MCF 10A (cell line): ENCODE measurements at regions of chr10 and their contacts with region 1.

Region 1: DNA sequence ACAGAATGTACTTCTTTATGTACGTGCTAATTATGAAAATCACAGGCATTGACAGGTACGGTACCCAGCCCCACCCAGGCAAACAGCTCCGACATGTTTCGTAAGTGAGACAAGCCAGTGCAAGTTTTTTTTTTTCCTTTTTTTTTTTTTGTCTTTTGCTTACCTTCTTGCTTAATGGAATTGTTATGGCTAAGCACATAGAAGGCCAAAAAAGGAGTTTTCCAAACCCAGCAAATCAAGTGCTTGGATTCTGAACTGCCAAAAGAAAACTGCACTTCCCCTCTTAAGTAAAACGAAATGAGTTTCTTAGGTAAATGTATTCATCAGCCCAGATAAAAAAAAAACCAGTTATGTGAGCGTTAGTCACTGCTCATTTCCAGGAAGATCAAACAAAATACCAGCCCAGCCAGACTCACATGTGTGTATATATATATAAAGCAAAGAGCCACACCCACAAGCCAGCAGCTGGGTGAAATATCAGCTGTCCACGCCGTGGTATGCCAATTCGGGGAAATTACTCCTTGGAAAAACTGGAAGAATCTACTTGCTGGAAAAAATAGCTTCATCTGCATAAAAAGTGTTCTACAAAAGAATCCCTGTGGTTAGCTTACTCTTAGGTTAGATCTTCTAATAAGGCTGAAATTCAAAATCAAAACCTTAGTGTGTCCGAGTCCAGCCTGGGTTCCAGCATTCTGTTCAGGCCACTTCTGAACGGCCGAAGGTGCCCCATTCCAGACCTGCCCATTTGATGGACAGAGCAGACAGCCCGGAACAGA is 8.0 kb downstream of the KLF6 start:
- DNase-seq: peak; percentile 92
- H3K4me3 Mint-ChIP-seq: peak overlapping the region; percentile 44
- H3K27ac Mint-ChIP-seq: peak overlapping the region; percentile 75
- H3K4me1 Mint-ChIP-seq: peaks cover 45% of the 10 kb centered on the region
- H3K27me3 Mint-ChIP-seq: no peaks in the 10 kb centered on the region
- CTCF ChIP-seq: no peak

Region 2: DNA sequence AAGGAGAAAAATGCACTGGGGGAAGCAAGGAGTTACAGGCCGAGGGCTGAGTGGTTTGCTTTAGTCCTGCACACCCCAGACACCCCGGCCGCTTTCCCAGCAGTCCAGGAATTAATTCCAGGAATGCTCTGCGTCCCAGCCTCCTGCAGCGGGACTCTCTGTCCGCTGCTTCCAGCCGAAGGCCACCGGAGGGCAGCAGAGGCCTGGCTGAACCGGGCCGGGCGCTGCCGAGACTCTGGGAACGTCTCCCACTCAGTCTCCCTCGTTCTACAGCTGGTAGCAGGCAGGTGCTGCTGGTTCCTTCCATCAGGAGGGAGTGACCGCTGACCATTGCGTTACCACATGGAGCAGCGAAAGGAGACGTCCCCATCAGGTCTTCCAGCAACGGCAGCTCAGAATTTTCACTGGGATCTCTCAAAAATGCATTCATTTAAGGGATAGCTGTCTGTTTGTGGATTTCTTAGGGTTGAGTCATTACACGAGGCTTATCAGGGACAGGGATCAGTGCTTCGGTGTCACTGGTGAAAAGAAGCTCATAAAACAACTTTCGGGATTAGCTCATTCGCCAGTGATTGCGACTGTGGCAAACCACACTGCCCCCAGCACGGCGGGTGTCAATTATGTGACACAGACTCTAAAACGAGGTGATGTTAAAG is 579.5 kb before region 1 on chr10:
- CTCF ChIA-PET with region 1: interaction called, 7 read pairs
- POLR2A ChIA-PET with region 1: interaction called, 4 read pairs
- intact Hi-C with region 1: loop called (anchors 1 kb)
- DNase-seq: peak; percentile 80
- H3K4me3 Mint-ChIP-seq: peak overlapping the region; percentile 69
- H3K27ac Mint-ChIP-seq: peak overlapping the region; percentile 61
- H3K4me1 Mint-ChIP-seq: peaks cover 16% of the 10 kb centered on the region
- H3K27me3 Mint-ChIP-seq: no peaks in the 10 kb centered on the region
- CTCF ChIP-seq: peak; percentile 79

Region 3: GRCh38 chr10:3472287-3473051 is 304.5 kb before region 1 on chr10:
- CTCF ChIA-PET with region 1: interaction called, 3 read pairs
- POLR2A ChIA-PET with region 1: interaction called, 94 read pairs
- intact Hi-C with region 1: loop called (anchors 1 kb)
- DNase-seq: peak; percentile 67
- H3K4me3 Mint-ChIP-seq: peak overlapping the region; percentile 13
- H3K27ac Mint-ChIP-seq: peak overlapping the region; percentile 74
- H3K4me1 Mint-ChIP-seq: peaks cover 44% of the 10 kb centered on the region
- H3K27me3 Mint-ChIP-seq: no peaks in the 10 kb centered on the region
- CTCF ChIP-seq: no peak

Region 4: GRCh38 chr10:3585385-3585784 is 191.6 kb before region 1 on chr10:
- CTCF ChIA-PET with region 1: no interaction called
- POLR2A ChIA-PET with region 1: no interaction called
- intact Hi-C with region 1: no loop called
- DNase-seq: no peak
- H3K4me3 Mint-ChIP-seq: no peak overlapping the region
- H3K27ac Mint-ChIP-seq: no peak overlapping the region
- H3K4me1 Mint-ChIP-seq: no peaks in the 10 kb centered on the region
- H3K27me3 Mint-ChIP-seq: no peaks in the 10 kb centered on the region
- CTCF ChIP-seq: no peak

Region 5: DNA sequence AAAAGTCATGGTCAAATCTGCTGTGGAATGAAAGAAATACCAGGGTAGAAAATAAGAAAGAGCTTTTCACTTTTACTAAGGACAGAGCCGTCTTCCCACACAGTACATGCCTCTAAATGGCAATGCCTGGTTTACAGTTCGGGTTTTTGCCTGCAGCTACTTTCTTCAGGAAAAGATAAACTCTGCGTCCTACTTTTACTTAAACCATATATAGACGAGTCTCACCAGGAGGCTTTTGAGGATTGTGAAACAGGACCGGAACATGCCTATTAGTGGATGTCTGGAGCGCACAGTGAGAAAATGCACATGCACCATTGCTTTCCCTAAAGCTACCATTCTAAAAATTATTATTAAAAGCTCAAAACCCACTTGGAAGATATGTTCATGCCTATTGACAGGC is 62.5 kb before region 1 on chr10:
- CTCF ChIA-PET with region 1: no interaction called
- POLR2A ChIA-PET with region 1: no interaction called
- intact Hi-C with region 1: no loop called
- DNase-seq: peak; percentile 61
- H3K4me3 Mint-ChIP-seq: no peak overlapping the region
- H3K27ac Mint-ChIP-seq: no peak overlapping the region
- H3K4me1 Mint-ChIP-seq: peaks cover 5% of the 10 kb centered on the region
- H3K27me3 Mint-ChIP-seq: no peaks in the 10 kb centered on the region
- CTCF ChIP-seq: no peak

Region 6: GRCh38 chr10:3740157-3740871 is 36.7 kb before region 1 on chr10:
- CTCF ChIA-PET with region 1: no interaction called
- POLR2A ChIA-PET with region 1: interaction called, 27 read pairs
- intact Hi-C with region 1: no loop called
- DNase-seq: peak; percentile 85
- H3K4me3 Mint-ChIP-seq: no peak overlapping the region
- H3K27ac Mint-ChIP-seq: peak overlapping the region; percentile 85
- H3K4me1 Mint-ChIP-seq: peaks cover 15% of the 10 kb centered on the region
- H3K27me3 Mint-ChIP-seq: no peaks in the 10 kb centered on the region
- CTCF ChIP-seq: no peak

Region 7: DNA sequence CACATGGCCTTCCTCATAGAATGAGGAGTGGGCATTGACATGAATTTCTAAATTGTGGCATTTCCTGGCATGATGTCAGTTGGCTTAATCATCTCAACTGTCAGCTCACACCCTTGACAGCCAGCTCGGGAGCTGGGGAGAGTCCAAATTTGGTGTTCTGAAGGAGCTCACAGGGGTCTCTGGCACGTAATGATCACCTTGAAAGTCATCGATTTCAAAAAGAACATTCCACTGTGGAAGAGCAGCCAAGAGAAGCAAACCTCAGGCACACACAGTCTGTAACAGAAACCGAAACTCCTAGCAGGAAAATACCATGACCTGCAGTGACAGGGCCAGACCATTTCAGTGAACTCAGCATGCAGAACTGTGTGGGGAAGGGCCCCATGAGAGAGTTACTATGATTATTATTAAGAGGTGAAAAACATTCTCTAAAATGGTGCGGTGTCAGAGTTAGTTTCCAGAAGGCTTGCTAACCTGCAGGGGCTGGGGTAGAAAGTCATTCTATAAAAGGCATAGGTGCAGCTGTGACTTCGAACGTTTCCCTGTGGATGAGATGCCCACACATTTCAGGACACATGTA is 34.4 kb after region 1 on chr10:
- CTCF ChIA-PET with region 1: interaction called, 5 read pairs
- POLR2A ChIA-PET with region 1: interaction called, 571 read pairs
- intact Hi-C with region 1: no loop called
- DNase-seq: peak; percentile 89
- H3K4me3 Mint-ChIP-seq: peak overlapping the region; percentile 61
- H3K27ac Mint-ChIP-seq: peak overlapping the region; percentile 100
- H3K4me1 Mint-ChIP-seq: peaks cover 51% of the 10 kb centered on the region
- H3K27me3 Mint-ChIP-seq: no peaks in the 10 kb centered on the region
- CTCF ChIP-seq: no peak

Region 8: DNA sequence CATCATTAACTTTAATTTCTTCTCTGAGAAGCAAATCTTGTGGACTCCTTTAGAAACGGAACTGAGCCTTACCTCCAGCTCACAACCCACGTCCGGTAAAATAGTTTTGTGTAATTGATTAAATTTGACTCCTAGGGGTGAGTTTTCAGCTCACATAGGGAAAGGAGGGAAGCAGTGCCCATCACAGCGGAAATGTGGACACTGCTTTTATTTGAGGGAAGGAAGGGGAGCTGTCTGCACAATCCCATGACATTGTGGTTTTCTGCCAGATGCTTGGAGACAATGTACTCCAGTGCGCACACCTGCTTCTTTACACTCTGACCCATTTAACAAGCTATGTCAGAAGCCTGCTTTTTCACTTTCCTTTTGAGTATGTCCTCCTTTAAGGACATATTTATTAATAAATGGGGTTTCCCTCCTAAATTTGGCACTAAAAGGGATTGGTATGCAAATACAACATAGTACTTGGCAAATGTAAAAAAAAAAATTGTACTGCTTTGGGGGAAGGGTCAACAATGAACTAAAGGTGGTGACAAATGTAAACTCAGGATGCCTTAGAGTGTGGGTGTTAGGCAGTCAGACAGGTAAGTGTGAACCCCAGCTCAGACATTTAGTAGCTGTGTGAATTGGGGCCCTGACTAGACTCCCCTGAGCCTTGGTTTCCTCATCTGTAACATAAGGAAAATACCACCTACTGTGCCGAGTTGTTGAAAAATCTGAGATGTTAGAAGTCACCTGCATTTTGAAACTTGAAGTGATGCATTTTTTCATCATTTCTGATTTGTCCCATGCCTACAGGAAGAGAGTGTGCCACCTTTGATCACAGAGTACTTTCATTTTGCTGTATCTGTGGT is 98.2 kb after region 1 on chr10:
- CTCF ChIA-PET with region 1: no interaction called
- POLR2A ChIA-PET with region 1: no interaction called
- intact Hi-C with region 1: no loop called
- DNase-seq: no peak
- H3K4me3 Mint-ChIP-seq: no peak overlapping the region
- H3K27ac Mint-ChIP-seq: no peak overlapping the region
- H3K4me1 Mint-ChIP-seq: peaks cover 6% of the 10 kb centered on the region
- H3K27me3 Mint-ChIP-seq: no peaks in the 10 kb centered on the region
- CTCF ChIP-seq: no peak

Region 9: GRCh38 chr10:4196771-4197390 is 419.9 kb after region 1 on chr10:
- CTCF ChIA-PET with region 1: no interaction called
- POLR2A ChIA-PET with region 1: no interaction called
- intact Hi-C with region 1: no loop called
- DNase-seq: no peak
- H3K4me3 Mint-ChIP-seq: no peak overlapping the region
- H3K27ac Mint-ChIP-seq: no peak overlapping the region
- H3K4me1 Mint-ChIP-seq: peaks cover 7% of the 10 kb centered on the region
- H3K27me3 Mint-ChIP-seq: no peaks in the 10 kb centered on the region
- CTCF ChIP-seq: no peak

Region 10: DNA sequence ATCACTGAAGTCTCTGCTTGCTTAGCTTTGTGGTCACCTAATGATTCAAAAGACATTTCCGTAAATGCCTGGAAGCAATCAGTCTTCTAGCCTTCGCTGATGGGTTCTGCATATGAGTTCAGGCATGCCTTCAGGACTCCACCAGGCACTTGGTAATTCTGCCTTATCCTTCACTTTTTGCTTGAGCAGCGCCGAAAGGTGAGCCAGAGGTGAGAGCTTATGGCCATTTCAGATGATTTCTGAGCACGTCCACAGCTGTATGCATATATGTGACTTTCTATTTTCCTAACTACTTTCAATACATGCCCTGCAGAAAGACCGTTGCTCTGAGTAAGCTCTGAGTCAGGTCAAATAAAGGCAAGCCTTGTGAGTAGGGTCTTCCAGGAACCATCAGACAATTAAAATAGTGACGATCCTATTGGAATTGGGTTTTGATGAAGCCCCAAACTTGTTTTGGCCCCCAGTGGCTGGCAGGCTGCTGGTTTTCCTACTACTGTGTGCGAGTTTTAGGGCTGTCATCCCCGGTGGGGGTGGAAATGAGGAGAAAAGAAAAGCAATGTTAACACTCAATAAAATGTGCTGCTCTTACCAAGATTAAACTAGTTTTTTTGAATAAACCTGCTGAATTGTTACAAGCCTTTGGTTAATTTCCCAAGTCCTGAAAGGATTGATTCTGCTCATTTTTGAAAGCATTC is 894.6 kb after region 1 on chr10:
- CTCF ChIA-PET with region 1: no interaction called
- POLR2A ChIA-PET with region 1: interaction called, 120 read pairs
- intact Hi-C with region 1: no loop called
- DNase-seq: peak; percentile 72
- H3K4me3 Mint-ChIP-seq: peak overlapping the region; percentile 56
- H3K27ac Mint-ChIP-seq: peak overlapping the region; percentile 90
- H3K4me1 Mint-ChIP-seq: peaks cover 27% of the 10 kb centered on the region
- H3K27me3 Mint-ChIP-seq: no peaks in the 10 kb centered on the region
- CTCF ChIP-seq: no peak